Heart left ventricle (tissue), 16 donors: ENCODE measurements at regions of chr15 and their contacts with region 1.

Region 1: DNA sequence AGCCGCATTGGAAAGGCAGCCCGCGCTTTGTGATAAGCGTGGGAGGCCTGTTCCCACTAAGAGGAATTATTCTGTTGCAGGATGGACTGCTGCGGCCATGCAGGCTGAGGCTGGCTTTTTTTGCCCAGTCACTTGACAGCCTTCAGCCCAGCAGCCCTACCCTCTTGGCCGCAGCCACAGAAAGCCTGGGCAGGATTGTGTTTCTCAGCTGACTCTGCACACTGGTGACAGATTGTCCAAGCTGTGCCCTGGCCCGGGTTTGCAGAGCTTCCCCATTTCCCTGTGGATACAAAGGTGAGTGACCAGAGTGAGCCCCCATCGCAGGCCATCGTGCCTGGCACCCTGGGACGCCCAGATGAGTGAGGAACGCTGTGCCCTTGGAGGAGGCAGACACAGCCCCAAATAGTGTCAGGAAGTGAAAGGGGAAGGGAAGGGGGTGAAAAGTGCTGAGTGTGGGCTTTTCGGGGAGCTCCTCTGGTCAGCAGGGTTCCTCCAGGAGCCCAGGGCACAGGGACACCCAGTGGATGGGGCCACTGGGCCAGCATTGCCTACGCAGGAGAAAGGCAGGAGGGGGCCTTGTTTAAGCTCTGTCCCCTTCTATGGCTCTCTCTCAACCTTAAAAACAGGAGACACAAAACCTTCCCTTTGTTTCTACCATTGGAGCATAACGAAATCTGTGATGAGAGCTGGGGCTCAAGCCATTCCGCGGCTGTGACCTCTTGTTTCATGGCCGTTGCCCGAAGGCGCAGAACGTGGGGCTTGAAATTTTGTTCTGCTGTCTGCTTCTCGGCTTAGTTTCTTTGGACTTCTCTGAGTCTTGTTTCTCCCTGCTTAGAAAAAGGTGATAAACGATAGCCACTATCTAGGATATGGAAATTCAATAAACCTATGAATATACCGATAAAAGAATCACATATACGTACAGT is 91.5 kb upstream of the MEF2A start:
- DNase-seq: peak; percentile 74 to 87 (median 76)
- ATAC-seq: peak; percentile 68 to 90 (median 84)
- H3K4me3 ChIP-seq: peak overlapping the region in 5 of 12 donors; percentile 3 to 37 (median 32)
- H3K27ac ChIP-seq: peak overlapping the region; percentile 59 to 88 (median 78)
- H3K4me1 ChIP-seq: peaks cover 0 to 66% (median 54%) of the 10 kb centered on the region in 12 donors
- H3K27me3 ChIP-seq: no peaks in the 10 kb centered on the region
- CTCF ChIP-seq: no peak
- POLR2A ChIP-seq: peak in 1 of 2 donors; percentile 17

Region 2: GRCh38 chr15:99442252-99442897 is 31.9 kb before region 1 on chr15:
- intact Hi-C with region 1: loop called in 1 of 10 experiments (anchors 1 kb)
- DNase-seq: peak; percentile 80 to 89 (median 83)
- ATAC-seq: peak; percentile 88 to 94 (median 92)
- H3K4me3 ChIP-seq: peak overlapping the region in 2 of 12 donors; percentile 17 to 19
- H3K27ac ChIP-seq: peak overlapping the region; percentile 70 to 89 (median 82)
- H3K4me1 ChIP-seq: peaks cover 5 to 64% (median 47%) of the 10 kb centered on the region in 12 donors
- H3K27me3 ChIP-seq: no peaks in the 10 kb centered on the region
- CTCF ChIP-seq: no peak
- POLR2A ChIP-seq: peak in 1 of 2 donors; percentile 19